PC-3 (cell line): ENCODE measurements at regions of chr3 and their contacts with region 1.

Region 1: GRCh38 chr3:136196401-136197158 is 445 bp upstream of the MSL2 start:
- DNase-seq: peak; percentile 98
- ATAC-seq: peak; percentile 73
- H3K4me3 ChIP-seq: peak overlapping the region; percentile 100
- H3K27ac ChIP-seq: peak overlapping the region; percentile 98
- H3K4me1 ChIP-seq: peaks cover 18% of the 10 kb centered on the region
- H3K27me3 ChIP-seq: no peaks in the 10 kb centered on the region
- CTCF ChIP-seq: no peak

Region 2: DNA sequence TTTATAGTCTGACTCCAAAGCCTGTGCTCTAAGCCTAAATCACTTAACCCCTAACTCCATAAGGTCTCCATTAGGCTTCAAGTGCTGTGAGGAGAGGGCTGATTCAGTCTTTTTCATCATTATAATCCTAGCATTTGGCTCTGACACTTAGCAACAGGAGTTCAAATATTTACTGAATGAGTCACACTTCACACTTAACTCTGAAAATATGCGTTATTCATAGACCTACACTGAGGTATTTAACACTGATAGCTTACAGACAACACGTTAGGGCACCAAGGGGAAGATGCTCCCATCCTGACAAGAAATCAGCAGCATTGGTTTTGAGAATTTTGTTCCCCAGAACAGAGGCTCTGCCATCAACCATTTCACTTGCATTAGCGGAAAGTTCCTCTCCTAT is 54.0 kb before region 1 on chr3:
- CTCF ChIA-PET with region 1: interaction called, 3 read pairs
- POLR2A ChIA-PET with region 1: no interaction called
- intact Hi-C with region 1: loop called (anchors 2 kb)
- DNase-seq: peak; percentile 84
- ATAC-seq: peak; percentile 91
- H3K4me3 ChIP-seq: no peak overlapping the region
- H3K27ac ChIP-seq: peak overlapping the region; percentile 57
- H3K4me1 ChIP-seq: peaks cover 21% of the 10 kb centered on the region
- H3K27me3 ChIP-seq: no peaks in the 10 kb centered on the region
- CTCF ChIP-seq: no peak

Region 3: DNA sequence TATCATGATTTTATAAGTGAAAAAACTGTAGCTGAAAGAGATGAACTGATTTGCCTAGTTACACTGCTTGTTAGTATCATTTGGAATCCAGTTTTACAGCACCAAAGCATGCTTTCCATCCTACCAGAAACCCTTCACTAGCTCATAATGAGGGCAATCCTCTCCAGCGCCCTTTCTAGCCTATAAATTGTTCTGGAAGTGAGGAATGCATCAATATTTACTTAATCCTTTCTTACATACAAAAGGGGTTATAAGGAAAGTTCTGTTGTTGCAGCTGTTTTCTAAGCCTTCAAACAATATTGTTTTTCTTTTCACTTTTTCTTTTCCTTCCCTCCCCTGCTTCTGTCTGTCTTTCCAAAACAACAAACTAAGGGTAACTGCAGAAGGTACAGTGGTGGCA is 42.5 kb after region 1 on chr3:
- CTCF ChIA-PET with region 1: no interaction called
- POLR2A ChIA-PET with region 1: interaction called, 19 read pairs
- intact Hi-C with region 1: loop called (anchors 2 kb)
- DNase-seq: peak; percentile 23
- ATAC-seq: peak; percentile 61
- H3K4me3 ChIP-seq: no peak overlapping the region
- H3K27ac ChIP-seq: no peak overlapping the region
- H3K4me1 ChIP-seq: no peaks in the 10 kb centered on the region
- H3K27me3 ChIP-seq: no peaks in the 10 kb centered on the region
- CTCF ChIP-seq: no peak

Region 4: DNA sequence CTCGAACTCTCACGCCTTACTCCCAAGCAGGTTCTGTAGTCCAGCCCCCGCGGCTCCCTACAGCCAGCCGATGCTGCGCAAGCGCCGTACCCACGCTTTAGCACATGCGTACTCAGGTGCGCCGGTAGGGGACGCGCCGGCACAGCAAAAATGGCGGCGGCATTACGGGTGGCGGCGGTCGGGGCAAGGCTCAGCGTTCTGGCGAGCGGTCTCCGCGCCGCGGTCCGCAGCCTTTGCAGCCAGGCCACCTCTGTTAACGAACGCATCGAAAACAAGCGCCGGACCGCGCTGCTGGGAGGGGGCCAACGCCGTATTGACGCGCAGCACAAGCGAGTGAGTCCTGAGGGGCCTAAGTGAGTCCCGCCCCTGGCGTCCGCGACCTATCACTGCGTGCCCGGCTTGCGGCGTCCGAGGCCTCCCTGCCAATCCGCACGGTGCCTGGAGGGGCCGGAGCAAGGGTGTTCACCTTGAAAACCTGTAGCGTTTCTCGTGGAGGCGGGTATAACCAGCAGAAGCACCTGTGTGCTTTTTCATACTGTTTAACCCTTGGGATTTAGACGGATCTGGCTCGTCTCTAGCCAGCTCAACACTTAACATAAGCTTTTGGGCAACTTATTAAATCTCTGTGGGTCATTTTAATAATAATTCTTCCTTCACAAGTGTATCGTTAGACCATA is 53.8 kb after region 1 on chr3 and contains the start of gene PCCB:
- CTCF ChIA-PET with region 1: interaction called, 3 read pairs
- POLR2A ChIA-PET with region 1: no interaction called
- intact Hi-C with region 1: loop called (anchors 1 kb)
- DNase-seq: peak; percentile 88
- ATAC-seq: peak; percentile 100
- H3K4me3 ChIP-seq: peak within 1 kb of the TSS; percentile 66
- H3K27ac ChIP-seq: peak within 1 kb of the TSS; percentile 81
- H3K4me1 ChIP-seq: peaks cover 13% of the 10 kb centered on the region
- H3K27me3 ChIP-seq: no peaks in the 10 kb centered on the region
- CTCF ChIP-seq: peak; percentile 57
- total RNA-seq, gene PCCB: 53.5 and 58.2 TPM in 2 replicates